ENCODE measurements at regions of chr4 and their contacts with region 1.

Region 1: GRCh38 chr4:94284889-94285288 is 57.7 kb downstream of the HPGDS start:
- DNase-seq: no peak
- H3K4me3 ChIP-seq: no peak overlapping the region
- H3K27ac ChIP-seq: no peak overlapping the region
- H3K4me1 ChIP-seq: peaks cover 0 to 3% (median 0%) of the 10 kb centered on the region in 4 donors
- H3K27me3 ChIP-seq: no peaks in the 10 kb centered on the region
- CTCF ChIP-seq: no peak
- EP300 ChIP-seq: no peak
- POLR2A ChIP-seq: no peak

Region 2: DNA sequence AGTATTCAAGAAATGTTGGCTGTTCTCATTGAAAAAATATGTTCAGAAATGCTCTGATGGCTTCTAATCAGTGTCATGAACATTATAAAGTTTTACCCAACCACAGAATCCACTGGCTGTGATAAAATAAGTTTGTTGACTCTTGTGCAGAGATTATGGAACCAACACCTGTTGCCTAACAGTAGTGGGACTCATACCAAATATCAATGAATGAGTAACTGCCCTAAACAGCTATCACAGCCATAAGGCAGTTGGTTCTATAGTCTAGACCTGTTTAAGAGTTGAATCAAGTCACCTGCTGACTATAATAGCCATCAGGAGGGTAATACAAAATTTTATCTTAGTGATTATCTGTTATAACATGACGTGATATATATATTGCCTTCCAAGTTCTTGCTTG is 288.0 kb before region 1 on chr4:
- in situ Hi-C with region 1: no loop called
- intact Hi-C with region 1: loop called (anchors 5 kb)
- DNase-seq: no peak
- H3K4me3 ChIP-seq: no peak overlapping the region
- H3K27ac ChIP-seq: no peak overlapping the region
- H3K4me1 ChIP-seq: peaks cover 0 to 30% (median 6%) of the 10 kb centered on the region in 4 donors
- H3K27me3 ChIP-seq: no peaks in the 10 kb centered on the region
- CTCF ChIP-seq: no peak
- EP300 ChIP-seq: no peak
- POLR2A ChIP-seq: no peak

Region 3: GRCh38 chr4:94766856-94767255 is 482.0 kb after region 1 on chr4:
- in situ Hi-C with region 1: no loop called
- intact Hi-C with region 1: no loop called
- DNase-seq: no peak
- H3K4me3 ChIP-seq: no peak overlapping the region
- H3K27ac ChIP-seq: no peak overlapping the region
- H3K4me1 ChIP-seq: no peaks in the 10 kb centered on the region
- H3K27me3 ChIP-seq: peaks cover 6% of the 10 kb centered on the region
- CTCF ChIP-seq: no peak
- EP300 ChIP-seq: no peak
- POLR2A ChIP-seq: no peak